HAP-1 (cell line): ENCODE measurements at regions of chr16 and their contacts with region 1.

Region 1: DNA sequence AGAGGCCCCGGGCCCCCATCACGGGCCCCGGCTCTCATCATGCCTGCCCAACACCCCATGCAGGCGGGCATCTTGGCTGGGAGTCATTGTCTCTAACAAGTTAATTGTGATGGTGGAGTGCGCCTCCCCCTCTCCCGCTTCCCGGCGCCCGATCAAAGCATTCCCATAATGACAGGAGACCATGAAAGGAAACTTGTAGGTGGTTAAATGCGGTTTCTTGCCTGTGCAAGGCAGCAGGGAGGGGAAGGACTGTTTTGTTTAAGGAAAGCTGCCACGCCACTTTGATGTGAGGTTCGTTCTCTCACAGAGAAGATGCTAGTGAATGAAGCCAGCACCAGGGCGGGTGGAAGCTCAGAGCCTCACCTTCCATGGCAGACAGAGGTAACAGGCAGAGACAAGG is 45.4 kb downstream of the C16orf78 start:
- DNase-seq: no peak
- H3K4me3 ChIP-seq: no peak overlapping the region
- H3K4me1 ChIP-seq: no peaks in the 10 kb centered on the region
- H3K27me3 ChIP-seq: no peaks in the 10 kb centered on the region

Region 2: DNA sequence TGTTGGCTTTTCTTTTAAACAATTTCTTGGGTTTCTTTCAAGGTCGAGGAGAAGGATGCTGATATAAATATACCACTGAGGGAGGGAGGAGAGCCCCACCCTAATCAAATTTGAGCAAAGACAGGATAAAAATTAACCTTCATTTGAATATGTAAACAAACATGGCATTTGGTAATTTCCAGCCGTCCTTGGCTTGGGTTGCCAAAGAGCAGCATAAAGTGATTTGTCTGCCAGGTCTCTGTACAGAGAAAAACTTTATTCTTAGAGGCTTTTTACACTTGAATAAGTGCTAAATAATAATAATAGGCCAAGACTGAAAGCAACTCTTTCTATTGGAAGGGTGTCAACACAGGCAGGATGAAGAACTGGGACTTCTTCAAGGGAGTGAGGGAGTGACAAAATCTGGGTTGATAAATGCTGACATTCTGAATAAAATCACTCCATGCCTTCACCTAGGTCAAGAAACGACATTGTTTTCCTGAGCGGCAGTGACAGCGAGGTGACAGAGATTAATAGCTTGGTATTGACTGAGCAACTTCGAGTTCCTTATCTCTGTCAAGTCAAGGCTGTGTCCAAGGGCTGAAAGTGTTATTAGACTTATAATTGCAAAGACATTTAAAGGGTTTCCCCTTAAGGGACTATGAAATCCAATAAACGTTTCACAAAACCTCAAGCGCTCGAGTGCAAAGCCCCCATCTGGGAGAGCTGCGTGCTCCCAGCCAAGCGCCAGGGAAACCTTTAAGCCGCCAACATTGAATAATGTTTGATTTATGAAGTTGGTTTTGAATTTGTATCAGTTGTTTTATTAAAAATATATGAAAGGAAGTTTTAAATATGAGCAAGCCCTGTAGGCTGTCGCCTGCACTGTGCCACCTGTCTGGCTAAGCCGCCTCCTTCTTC is 539.5 kb before region 1 on chr16:
- in situ Hi-C with region 1: no loop called
- DNase-seq: no peak
- H3K4me3 ChIP-seq: no peak overlapping the region
- H3K4me1 ChIP-seq: no peaks in the 10 kb centered on the region
- H3K27me3 ChIP-seq: no peaks in the 10 kb centered on the region

Region 3: GRCh38 chr16:49194537-49195236 is 224.3 kb before region 1 on chr16:
- in situ Hi-C with region 1: no loop called
- DNase-seq: no peak
- H3K4me3 ChIP-seq: no peak overlapping the region
- H3K4me1 ChIP-seq: no peaks in the 10 kb centered on the region
- H3K27me3 ChIP-seq: no peaks in the 10 kb centered on the region

Region 4: GRCh38 chr16:49921791-49922456 is 502.9 kb after region 1 on chr16:
- in situ Hi-C with region 1: loop called (anchors 10 kb)
- DNase-seq: peak; percentile 43 to 83
- H3K4me3 ChIP-seq: no peak overlapping the region
- H3K4me1 ChIP-seq: no peaks in the 10 kb centered on the region
- H3K27me3 ChIP-seq: no peaks in the 10 kb centered on the region